Right cardiac atrium (tissue), 5 donors: ENCODE measurements at regions of chr3 and their contacts with region 1.

Region 1: DNA sequence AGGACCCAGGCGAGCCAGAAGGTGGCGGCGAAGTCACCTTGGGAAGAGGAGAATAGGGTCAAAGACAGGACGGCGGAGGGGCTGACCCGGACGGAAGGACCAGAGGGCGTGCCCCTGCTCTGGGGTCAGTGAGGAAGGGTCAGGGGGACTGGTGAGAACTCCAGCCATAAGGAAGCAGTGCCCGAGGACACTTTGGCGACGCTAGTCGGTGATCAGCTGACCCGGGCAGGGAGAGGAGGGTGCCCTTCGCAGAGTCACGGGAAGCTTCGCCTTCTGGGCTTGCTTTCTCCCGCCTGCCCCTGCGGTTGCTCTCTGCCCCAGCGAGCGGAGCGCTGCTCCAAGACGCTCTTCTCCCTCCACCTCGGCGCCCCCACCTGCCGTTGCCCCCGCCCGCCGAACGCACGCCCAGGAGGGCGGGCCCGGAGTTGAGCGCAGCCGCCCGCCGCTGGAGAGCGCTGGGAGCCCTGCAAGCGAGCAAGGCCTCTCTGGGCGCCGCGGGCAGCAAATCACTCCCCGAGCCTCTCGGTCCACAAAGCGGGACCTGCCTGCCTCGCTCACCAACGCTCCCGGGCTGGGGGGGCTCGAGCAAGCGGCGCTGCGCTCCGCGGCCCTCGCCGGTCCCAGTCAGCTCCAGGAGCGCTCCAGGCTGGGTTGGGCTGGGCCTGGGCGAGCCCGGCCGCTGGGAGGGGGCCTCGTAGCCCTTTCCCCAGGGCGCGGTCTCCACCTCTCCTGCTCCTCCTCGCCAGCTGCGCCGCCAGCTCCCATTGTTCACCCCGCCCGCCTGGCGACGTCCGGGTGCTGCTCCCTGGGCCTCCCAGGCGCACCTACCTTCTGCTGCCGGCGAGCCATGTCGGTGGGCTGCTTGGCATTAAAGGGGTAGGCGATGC is 1.2 kb downstream of the CADPS start:
- DNase-seq: peak; percentile 35 to 84 (median 78)
- ATAC-seq: peak; percentile 81 to 84
- H3K4me3 ChIP-seq: peak overlapping the region; percentile 49
- H3K27ac ChIP-seq: peak overlapping the region; percentile 56
- H3K4me1 ChIP-seq: no peaks in the 10 kb centered on the region
- H3K27me3 ChIP-seq: no peaks in the 10 kb centered on the region

Region 2: GRCh38 chr3:62632510-62633214 is 241.3 kb before region 1 on chr3:
- intact Hi-C with region 1: loop called in 1 of 4 experiments (anchors 10 kb)
- DNase-seq: no peak
- ATAC-seq: peak in 1 of 2 donors; percentile 49
- H3K4me3 ChIP-seq: no peak overlapping the region
- H3K27ac ChIP-seq: peak overlapping the region; percentile 71
- H3K4me1 ChIP-seq: peaks cover 2% of the 10 kb centered on the region
- H3K27me3 ChIP-seq: peaks cover 3% of the 10 kb centered on the region

Region 3: DNA sequence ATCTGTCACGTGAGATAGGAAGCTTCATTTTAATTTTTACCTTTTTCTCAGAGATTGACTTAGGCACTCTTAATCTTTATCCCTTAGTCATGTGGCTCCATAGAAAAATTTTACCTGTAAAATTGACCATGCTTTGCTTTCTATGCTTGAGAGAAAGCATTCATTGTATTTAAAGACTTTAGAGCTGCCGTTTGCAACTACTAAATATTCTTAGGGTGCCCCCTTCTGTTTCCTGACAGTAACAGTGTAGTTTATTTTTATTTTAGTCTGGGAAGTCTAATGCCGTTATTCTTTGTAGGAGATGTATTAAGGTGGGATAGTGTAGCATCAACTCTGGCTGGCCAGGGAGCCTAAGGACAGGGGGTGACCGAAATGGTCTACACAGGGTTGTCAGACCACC is 319.6 kb after region 1 on chr3:
- intact Hi-C with region 1: loop called in 1 of 4 experiments (anchors 10 kb)
- DNase-seq: no peak
- ATAC-seq: no peak
- H3K4me3 ChIP-seq: no peak overlapping the region
- H3K27ac ChIP-seq: no peak overlapping the region
- H3K4me1 ChIP-seq: peaks cover 1% of the 10 kb centered on the region
- H3K27me3 ChIP-seq: no peaks in the 10 kb centered on the region